ENCODE measurements at regions of chr13 and their contacts with region 1.

Region 1: GRCh38 chr13:102555917-102556553 is 40.8 kb upstream of the TPP2 start:
- DNase-seq: peak; percentile 59
- H3K4me3 ChIP-seq: no peak overlapping the region
- H3K27ac ChIP-seq: no peak overlapping the region
- H3K4me1 ChIP-seq: no peaks in the 10 kb centered on the region
- H3K27me3 ChIP-seq: no peaks in the 10 kb centered on the region
- CTCF ChIP-seq: peak; percentile 38 to 57

Region 2: GRCh38 chr13:101942038-101942437 is 614.0 kb before region 1 on chr13:
- CTCF ChIA-PET with region 1: no interaction called
- dilution Hi-C with region 1: no loop called
- in situ Hi-C with region 1: loop called in 1 of 2 experiments (anchors 10 kb)
- intact Hi-C with region 1: loop called (anchors 1 kb)
- DNase-seq: peak; percentile 43
- H3K4me3 ChIP-seq: no peak overlapping the region
- H3K27ac ChIP-seq: no peak overlapping the region
- H3K4me1 ChIP-seq: no peaks in the 10 kb centered on the region
- H3K27me3 ChIP-seq: no peaks in the 10 kb centered on the region
- CTCF ChIP-seq: peak; percentile 90 to 97

Region 3: DNA sequence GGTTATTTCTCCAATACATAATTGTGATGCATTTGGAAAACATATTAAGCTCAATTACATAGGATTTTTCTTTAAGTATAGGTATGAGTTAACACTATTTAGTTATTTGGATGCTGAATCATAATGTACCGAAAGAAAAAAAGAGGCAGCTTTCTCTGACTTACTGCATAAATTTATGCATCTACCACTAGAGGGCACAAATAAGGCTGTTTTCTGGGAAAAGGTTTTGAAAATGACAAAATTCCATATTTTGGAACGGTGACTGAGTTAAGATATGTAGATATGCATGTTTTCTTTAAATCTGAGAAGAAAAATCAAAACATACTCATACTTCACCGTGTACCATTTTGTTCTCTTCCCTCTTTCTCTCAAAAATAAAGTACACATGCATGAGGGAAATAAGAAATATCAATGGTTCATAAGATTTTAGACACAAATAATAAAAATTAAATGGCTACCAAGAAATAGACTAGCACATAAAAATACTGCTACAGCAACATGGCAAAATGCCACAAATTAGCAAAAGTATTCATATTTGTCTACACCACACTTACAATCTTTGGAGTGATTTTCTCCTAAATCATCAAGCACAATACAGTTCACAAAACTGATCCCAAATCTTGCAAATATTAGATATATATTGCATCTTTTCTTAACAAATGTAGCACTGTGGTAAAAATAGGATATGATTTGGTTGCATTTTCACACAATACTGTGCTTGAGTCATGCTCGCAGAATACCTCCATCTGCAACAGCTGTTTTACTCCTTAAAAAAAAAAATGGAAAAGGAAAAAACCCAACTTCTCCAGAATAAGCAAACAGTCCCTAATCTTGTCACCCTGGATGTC is 414.2 kb before region 1 on chr13:
- CTCF ChIA-PET with region 1: interaction called, 8 read pairs
- dilution Hi-C with region 1: no loop called
- in situ Hi-C with region 1: no loop called
- intact Hi-C with region 1: loop called (anchors 1 kb)
- DNase-seq: no peak
- H3K4me3 ChIP-seq: no peak overlapping the region
- H3K27ac ChIP-seq: no peak overlapping the region
- H3K4me1 ChIP-seq: no peaks in the 10 kb centered on the region
- H3K27me3 ChIP-seq: no peaks in the 10 kb centered on the region
- CTCF ChIP-seq: peak; percentile 79 to 91

Region 4: DNA sequence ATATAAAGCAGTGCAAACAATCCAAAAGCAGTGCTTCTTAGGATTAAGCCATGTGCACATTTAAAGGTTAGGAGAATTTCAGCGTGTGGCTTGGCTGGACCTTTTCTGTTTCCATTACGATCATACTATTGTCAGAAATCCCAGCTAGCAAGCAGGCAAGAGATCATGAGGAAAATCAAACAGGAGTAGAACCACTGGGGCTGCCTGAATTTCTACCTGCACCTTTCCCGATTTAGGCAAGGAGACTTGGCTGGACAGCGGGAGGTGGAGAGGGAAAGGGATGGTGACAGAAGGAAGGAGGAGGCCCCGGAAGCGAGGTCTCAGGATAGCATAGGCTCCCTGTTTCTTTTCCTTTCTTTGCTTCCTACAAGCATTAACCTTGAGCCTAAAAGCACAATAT is 256.7 kb before region 1 on chr13:
- CTCF ChIA-PET with region 1: no interaction called
- dilution Hi-C with region 1: no loop called
- in situ Hi-C with region 1: no loop called
- intact Hi-C with region 1: no loop called
- DNase-seq: no peak
- H3K4me3 ChIP-seq: no peak overlapping the region
- H3K27ac ChIP-seq: no peak overlapping the region
- H3K4me1 ChIP-seq: no peaks in the 10 kb centered on the region
- H3K27me3 ChIP-seq: no peaks in the 10 kb centered on the region
- CTCF ChIP-seq: no peak

Region 5: DNA sequence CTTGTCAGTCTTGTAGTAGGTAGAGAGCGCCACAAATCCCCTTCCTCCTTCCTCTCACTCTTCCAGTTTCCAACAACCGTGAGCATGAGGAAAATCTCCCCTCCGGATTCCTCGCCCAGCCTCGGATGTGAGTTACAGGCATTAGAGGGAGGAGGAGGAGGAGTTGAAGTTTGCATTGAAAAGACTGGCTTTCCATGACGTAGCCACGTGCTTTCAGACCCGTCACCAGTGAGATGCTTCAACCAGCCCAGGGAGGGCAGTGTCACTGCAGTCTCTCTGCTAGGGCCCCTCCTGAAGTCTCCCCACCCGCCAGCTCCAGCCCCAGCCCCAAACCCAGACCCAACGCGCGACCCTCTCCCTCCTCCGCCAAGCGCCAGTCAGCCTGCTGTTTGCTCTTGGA is 153.7 kb before region 1 on chr13:
- CTCF ChIA-PET with region 1: no interaction called
- dilution Hi-C with region 1: no loop called
- in situ Hi-C with region 1: no loop called
- intact Hi-C with region 1: loop called (anchors 10 kb)
- DNase-seq: no peak
- H3K4me3 ChIP-seq: peak overlapping the region in 1 of 3 experiments; percentile 30
- H3K27ac ChIP-seq: no peak overlapping the region
- H3K4me1 ChIP-seq: peaks cover 14% of the 10 kb centered on the region
- H3K27me3 ChIP-seq: peaks cover 3% of the 10 kb centered on the region
- CTCF ChIP-seq: no peak

Region 6: GRCh38 chr13:102620516-102620915 is 64.5 kb after region 1 on chr13:
- CTCF ChIA-PET with region 1: no interaction called
- dilution Hi-C with region 1: no loop called
- in situ Hi-C with region 1: no loop called
- intact Hi-C with region 1: no loop called
- DNase-seq: no peak
- H3K4me3 ChIP-seq: no peak overlapping the region
- H3K27ac ChIP-seq: no peak overlapping the region
- H3K4me1 ChIP-seq: no peaks in the 10 kb centered on the region
- H3K27me3 ChIP-seq: no peaks in the 10 kb centered on the region
- CTCF ChIP-seq: no peak